Ascending aorta (tissue), 2 donors: ENCODE measurements at regions of chr3 and their contacts with region 1.

Region 1: DNA sequence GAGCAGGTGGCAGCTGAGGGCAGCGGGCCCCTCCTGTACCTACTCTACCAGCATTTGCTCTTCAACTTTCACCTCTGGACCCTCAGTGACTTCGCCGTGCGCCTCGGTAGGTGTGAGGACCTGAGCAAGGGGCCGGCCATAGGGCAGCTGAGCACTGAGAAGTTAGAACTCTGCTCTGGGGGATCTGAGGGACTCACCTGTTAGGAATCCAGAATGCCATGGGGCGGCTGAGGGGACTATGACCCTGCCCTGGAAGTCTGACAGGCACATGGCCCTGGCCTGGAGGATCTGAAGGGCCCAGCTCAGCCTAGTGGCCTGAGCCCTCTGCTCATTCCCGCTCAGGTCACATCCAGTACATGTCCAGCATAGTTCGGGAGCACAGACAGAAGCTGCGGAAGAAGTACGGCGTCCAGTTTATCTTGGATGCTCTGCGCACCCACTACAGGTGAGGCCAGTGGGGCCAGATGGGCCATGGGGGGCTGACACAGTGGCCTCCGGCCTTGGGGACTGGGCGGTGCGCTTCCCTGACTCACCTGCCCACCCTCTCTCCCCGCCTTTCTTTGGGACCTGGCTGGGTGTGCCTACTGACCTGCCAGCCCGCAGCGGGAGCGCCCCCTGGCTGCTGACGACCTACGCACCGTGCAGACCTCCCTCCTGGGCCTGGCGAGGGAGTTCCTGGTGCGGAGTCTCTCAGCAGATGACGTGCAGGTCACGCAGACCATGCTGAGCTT is 18.8 kb downstream of the NBEAL2 start:
- DNase-seq: peak in 1 of 2 donors; percentile 9
- H3K4me3 ChIP-seq: no peak overlapping the region
- H3K27ac ChIP-seq: no peak overlapping the region
- H3K4me1 ChIP-seq: no peaks in the 10 kb centered on the region
- H3K27me3 ChIP-seq: no peaks in the 10 kb centered on the region
- CTCF ChIP-seq: peak; percentile 69 to 83 (median 78)

Region 2: GRCh38 chr3:46923559-46924350 is 74.5 kb before region 1 on chr3:
- intact Hi-C with region 1: loop called (anchors 1 kb)
- DNase-seq: no peak
- H3K4me3 ChIP-seq: no peak overlapping the region
- H3K27ac ChIP-seq: no peak overlapping the region
- H3K4me1 ChIP-seq: peaks cover 2 to 36% of the 10 kb centered on the region in 2 donors
- H3K27me3 ChIP-seq: no peaks in the 10 kb centered on the region
- CTCF ChIP-seq: peak; percentile 50 to 69 (median 54)